Transverse colon (tissue), 4 donors: ENCODE measurements at regions of chr5 and their contacts with region 1.

Region 1: DNA sequence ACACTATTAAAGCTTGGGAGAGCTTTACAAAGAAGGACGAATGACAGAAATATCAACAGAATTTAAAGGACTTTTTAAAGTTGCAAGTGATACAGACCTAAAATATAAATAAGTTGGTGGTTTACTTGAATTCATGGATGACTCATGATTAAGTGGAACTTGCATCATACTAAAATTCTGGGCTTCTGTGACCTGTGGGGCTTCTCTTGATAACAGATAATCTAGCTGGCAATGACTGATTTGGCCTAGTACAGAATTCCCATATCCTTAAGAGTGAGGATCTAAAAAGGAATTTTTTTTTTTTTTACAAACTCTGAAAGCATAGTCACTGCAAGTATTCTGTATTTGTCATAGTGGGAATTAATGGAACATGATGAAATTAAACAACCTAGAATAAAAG is 543.7 kb upstream of the SGCD start:
- DNase-seq: no peak
- H3K4me3 ChIP-seq: no peak overlapping the region
- H3K27ac ChIP-seq: no peak overlapping the region
- H3K4me1 ChIP-seq: no peaks in the 10 kb centered on the region
- H3K27me3 ChIP-seq: no peaks in the 10 kb centered on the region
- CTCF ChIP-seq: no peak
- EP300 ChIP-seq: no peak
- POLR2A ChIP-seq: no peak

Region 2: GRCh38 chr5:155815248-155815647 is 32.0 kb after region 1 on chr5:
- in situ Hi-C with region 1: no loop called
- intact Hi-C with region 1: loop called (anchors 1 kb)
- DNase-seq: no peak
- H3K4me3 ChIP-seq: no peak overlapping the region
- H3K27ac ChIP-seq: no peak overlapping the region
- H3K4me1 ChIP-seq: peaks cover 0 to 4% (median 0%) of the 10 kb centered on the region in 4 donors
- H3K27me3 ChIP-seq: no peaks in the 10 kb centered on the region
- CTCF ChIP-seq: no peak
- EP300 ChIP-seq: no peak
- POLR2A ChIP-seq: no peak